IMR-90 (cell line): ENCODE measurements at regions of chr6 and their contacts with region 1.

Region 1: DNA sequence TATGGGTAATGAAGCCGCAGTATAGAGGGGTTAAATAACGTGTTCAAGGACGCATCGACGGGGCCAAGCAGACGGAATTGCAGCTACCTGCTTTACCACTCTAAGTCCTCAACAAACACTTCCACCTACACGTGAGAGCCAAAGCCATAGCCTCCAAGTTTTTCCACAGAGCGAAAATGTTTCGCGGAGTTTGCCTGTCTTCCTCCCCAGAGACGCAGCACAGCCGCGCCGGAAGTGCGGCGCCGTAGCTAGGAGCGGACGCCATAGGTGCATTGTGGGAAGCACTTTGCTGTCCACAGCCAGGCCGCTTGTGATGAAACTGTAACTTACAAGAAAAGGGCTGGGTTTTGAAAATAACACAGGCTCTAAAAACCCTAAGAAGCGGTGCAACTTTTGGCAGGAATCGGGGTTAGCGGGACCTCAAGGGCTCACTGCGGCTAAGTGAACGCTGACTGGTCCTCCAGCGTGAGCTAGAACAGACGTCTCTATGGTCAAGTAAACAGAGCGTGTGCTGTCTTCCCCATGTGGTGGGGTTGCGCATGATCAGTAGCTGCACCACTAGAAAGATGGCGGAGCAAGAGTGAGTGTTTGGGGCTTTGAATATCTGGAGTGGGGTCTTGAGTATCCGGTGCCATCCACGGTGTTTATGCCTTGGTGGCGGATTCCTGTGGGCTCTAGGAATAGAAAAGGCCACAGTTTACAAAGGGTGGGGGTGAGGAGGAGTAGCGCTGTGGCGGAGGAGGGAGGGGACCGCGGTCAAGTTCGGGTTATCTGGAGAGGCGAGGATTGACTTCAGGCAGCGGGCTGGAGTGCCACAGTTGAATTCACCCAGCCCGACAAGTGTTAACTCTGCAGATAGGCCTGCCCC is at the start of gene RPL7L1:
- DNase-seq: peak; percentile 87
- ATAC-seq: peak; percentile 96
- H3K4me3 ChIP-seq: peak within 1 kb of the TSS; percentile 69
- H3K27ac ChIP-seq: peak within 1 kb of the TSS; percentile 99
- H3K4me1 ChIP-seq: no peaks in the 10 kb centered on the region
- H3K27me3 ChIP-seq: no peaks in the 10 kb centered on the region
- CTCF ChIP-seq: no peak
- POLR2A ChIP-seq: peak; percentile 95
- RAD21 ChIP-seq: no peak
- total RNA-seq, gene RPL7L1: 112 and 125 TPM in 2 replicates

Region 2: DNA sequence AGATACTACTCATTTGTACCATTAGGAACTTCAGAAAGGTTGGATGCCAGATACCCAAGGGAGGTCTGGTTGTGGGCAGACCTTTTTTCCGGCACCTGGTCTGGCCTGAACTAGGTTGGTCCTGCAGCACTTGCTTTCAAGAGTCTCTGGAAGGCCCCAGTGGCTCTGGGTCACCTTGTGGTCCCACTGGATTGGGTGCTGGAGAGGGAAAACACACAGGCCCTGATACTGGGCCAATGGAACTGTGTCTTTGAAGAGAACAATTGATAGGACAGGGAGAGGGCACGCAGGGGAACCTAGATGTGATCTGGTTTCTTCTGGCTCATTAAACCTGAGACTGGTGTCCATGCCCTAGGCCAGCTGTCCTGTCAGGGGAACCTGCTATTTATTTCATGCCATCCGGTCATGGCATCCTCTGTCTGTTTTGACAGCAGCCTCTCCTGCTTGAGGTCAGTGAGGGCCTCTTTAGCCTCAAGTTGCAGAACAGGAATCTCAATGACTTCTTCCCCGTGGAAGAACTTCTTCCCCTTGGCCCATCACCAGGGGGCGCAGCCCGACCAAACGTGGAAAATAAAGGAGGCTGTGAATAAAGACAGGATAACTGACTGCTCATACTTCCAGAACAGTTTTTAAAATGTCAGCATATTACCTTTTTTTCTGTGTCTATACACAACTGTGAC is 804.3 kb before region 1 on chr6:
- CTCF ChIA-PET with region 1: no interaction called
- POLR2A ChIA-PET with region 1: no interaction called
- dilution Hi-C with region 1: no loop called
- in situ Hi-C with region 1: loop called (anchors 25 kb)
- intact Hi-C with region 1: no loop called
- DNase-seq: peak; percentile 69
- ATAC-seq: peak; percentile 93
- H3K4me3 ChIP-seq: no peak overlapping the region
- H3K27ac ChIP-seq: no peak overlapping the region
- H3K4me1 ChIP-seq: no peaks in the 10 kb centered on the region
- H3K27me3 ChIP-seq: no peaks in the 10 kb centered on the region
- CTCF ChIP-seq: peak; percentile 96
- POLR2A ChIP-seq: no peak
- RAD21 ChIP-seq: peak; percentile 96

Region 3: GRCh38 chr6:42694586-42694985 is 185.0 kb before region 1 on chr6:
- CTCF ChIA-PET with region 1: no interaction called
- POLR2A ChIA-PET with region 1: interaction called, 4 read pairs
- dilution Hi-C with region 1: no loop called
- in situ Hi-C with region 1: no loop called
- intact Hi-C with region 1: loop called (anchors 2 kb)
- DNase-seq: peak; percentile 67
- ATAC-seq: peak; percentile 46; the same call in 1 of the 2 replicates
- H3K4me3 ChIP-seq: no peak overlapping the region
- H3K27ac ChIP-seq: no peak overlapping the region
- H3K4me1 ChIP-seq: peaks cover 17% of the 10 kb centered on the region
- H3K27me3 ChIP-seq: no peaks in the 10 kb centered on the region
- CTCF ChIP-seq: no peak
- POLR2A ChIP-seq: no peak
- RAD21 ChIP-seq: no peak

Region 4: GRCh38 chr6:42745707-42746462 is 133.7 kb before region 1 on chr6 and contains the start of gene TBCC:
- CTCF ChIA-PET with region 1: no interaction called
- POLR2A ChIA-PET with region 1: interaction called, 3 read pairs
- dilution Hi-C with region 1: no loop called
- in situ Hi-C with region 1: no loop called
- intact Hi-C with region 1: loop called (anchors 1 kb)
- DNase-seq: peak; percentile 99
- ATAC-seq: peak; percentile 79
- H3K4me3 ChIP-seq: peak within 1 kb of the TSS; percentile 68
- H3K27ac ChIP-seq: peak within 1 kb of the TSS; percentile 99
- H3K4me1 ChIP-seq: peaks cover 8% of the 10 kb centered on the region
- H3K27me3 ChIP-seq: no peaks in the 10 kb centered on the region
- CTCF ChIP-seq: no peak
- POLR2A ChIP-seq: peak; percentile 97
- RAD21 ChIP-seq: no peak
- total RNA-seq, gene TBCC: 32.6 and 33.9 TPM in 2 replicates

Region 5: GRCh38 chr6:42890311-42891198 is 10.9 kb after region 1 on chr6:
- CTCF ChIA-PET with region 1: no interaction called
- POLR2A ChIA-PET with region 1: interaction called, 12 read pairs
- dilution Hi-C with region 1: no loop called
- in situ Hi-C with region 1: no loop called
- intact Hi-C with region 1: no loop called
- DNase-seq: peak; percentile 97
- ATAC-seq: peak; percentile 97
- H3K4me3 ChIP-seq: peak overlapping the region; percentile 66
- H3K27ac ChIP-seq: peak overlapping the region; percentile 87
- H3K4me1 ChIP-seq: peaks cover 3% of the 10 kb centered on the region; the same call in 1 of the 2 replicates
- H3K27me3 ChIP-seq: no peaks in the 10 kb centered on the region
- CTCF ChIP-seq: no peak
- POLR2A ChIP-seq: peak; percentile 91
- RAD21 ChIP-seq: no peak